CD4-positive, alpha-beta T cell (primary cell): ENCODE measurements at regions of chr13 and their contacts with region 1.

Region 1: DNA sequence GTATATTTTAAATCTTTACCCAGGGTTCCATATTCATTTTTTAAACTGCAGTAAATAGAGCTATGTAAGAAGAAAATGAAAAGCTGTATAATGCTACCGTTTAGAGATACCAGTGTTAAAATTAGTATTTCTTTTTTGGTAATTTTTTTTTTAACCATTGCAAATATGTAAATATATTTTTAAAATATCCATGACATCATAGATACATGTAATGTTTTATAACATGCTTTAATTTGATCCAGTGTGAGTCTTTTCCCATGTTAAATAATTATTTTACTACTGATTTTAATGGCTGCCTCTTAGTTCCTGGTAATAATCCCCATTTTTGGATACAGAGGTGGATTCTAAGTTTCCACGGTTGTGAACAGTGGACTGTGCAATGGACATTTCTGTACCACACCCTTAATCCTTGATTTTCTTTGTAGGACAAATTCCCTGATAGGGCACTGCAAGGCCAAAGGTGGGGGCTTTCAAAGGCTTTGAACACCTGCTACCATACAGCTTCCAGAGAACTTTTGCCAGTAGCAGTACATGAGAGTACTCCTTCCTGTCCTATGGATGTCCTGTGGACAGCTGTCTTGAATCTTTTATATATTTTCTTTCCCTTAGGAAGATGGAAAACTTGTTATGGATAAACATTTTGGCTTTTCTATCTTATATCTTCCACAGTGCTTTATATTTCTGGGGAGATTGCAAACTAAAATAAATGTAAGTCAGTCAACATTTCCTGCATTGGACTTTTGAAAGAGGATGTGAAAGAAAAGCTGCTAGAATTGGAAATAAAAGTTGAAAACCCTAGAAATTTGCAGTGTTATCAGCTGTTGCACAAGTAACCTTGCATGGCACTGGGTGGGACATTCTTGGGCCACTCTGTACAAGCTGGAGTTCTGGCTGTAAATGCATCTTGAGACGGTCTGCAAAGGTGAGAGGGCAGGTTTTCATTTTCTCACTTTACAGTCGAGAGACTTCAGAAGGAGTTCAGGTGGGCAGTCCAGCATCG is 46.8 kb downstream of the ARHGEF7 start:
- DNase-seq: no peak
- ATAC-seq: no peak
- H3K4me3 ChIP-seq: no peak overlapping the region
- H3K4me3 Mint-ChIP-seq: no peak overlapping the region
- H3K27ac ChIP-seq: no peak overlapping the region
- H3K27ac Mint-ChIP-seq: no peak overlapping the region
- H3K4me1 ChIP-seq: peaks cover 22% of the 10 kb centered on the region
- H3K4me1 Mint-ChIP-seq: peaks cover 80% of the 10 kb centered on the region
- H3K27me3 ChIP-seq: no peaks in the 10 kb centered on the region
- H3K27me3 Mint-ChIP-seq: no peaks in the 10 kb centered on the region
- CTCF ChIP-seq: no peak

Region 2: DNA sequence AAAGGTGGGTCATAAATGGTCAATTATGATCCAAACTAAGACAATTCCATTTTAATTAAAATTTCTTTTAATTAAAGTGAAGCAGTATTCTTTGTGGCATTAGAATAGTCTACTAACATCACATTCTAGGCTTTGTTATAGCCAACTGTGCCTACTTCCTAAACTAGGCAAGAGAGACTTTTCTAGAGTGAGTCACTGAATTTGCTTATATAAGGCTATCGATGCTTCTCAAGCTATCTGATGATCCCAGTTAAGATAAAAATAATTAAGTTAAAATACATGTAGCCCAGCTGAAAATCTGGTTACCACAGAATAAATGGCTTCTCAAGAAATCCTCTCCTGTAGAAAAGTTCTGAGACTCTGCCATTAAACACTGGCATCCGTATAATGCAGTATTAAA is 259.5 kb before region 1 on chr13:
- CTCF ChIA-PET with region 1: no interaction called
- POLR2A ChIA-PET with region 1: no interaction called
- intact Hi-C with region 1: no loop called
- DNase-seq: no peak
- ATAC-seq: no peak
- H3K4me3 ChIP-seq: no peak overlapping the region
- H3K4me3 Mint-ChIP-seq: no peak overlapping the region
- H3K27ac ChIP-seq: no peak overlapping the region
- H3K27ac Mint-ChIP-seq: no peak overlapping the region
- H3K4me1 ChIP-seq: no peaks in the 10 kb centered on the region
- H3K4me1 Mint-ChIP-seq: peaks cover 20% of the 10 kb centered on the region
- H3K27me3 ChIP-seq: no peaks in the 10 kb centered on the region
- H3K27me3 Mint-ChIP-seq: no peaks in the 10 kb centered on the region
- CTCF ChIP-seq: no peak

Region 3: DNA sequence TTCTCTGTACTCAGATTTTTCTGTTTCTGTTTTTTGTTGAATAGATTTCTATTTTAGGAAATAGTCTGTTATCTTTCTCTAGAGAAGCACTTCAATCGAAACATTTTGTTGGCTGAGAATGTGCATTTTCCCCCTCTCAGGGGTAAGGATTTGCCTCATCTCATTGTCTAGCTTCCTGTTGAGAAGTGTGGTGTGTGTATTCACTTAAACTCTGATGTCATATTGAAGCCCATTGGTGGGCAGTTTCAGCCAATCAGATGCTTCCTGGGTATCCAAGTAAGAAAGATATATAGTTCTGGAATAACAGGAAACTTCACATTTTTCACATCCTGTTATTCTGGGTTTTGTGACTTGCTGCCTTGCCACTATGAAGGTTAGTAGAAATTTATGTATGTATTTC is 40.8 kb after region 1 on chr13:
- CTCF ChIA-PET with region 1: interaction called, 4 read pairs
- POLR2A ChIA-PET with region 1: interaction called, 4 read pairs
- intact Hi-C with region 1: loop called in 1 of 2 experiments (anchors 5 kb)
- DNase-seq: peak in 5 of 14 experiments; percentile 34 to 61 (median 50)
- ATAC-seq: peak; percentile 91
- H3K4me3 ChIP-seq: no peak overlapping the region
- H3K4me3 Mint-ChIP-seq: peak overlapping the region; percentile 68
- H3K27ac ChIP-seq: no peak overlapping the region
- H3K27ac Mint-ChIP-seq: peak overlapping the region; percentile 88
- H3K4me1 ChIP-seq: peaks cover 38% of the 10 kb centered on the region
- H3K4me1 Mint-ChIP-seq: peaks cover 82% of the 10 kb centered on the region
- H3K27me3 ChIP-seq: no peaks in the 10 kb centered on the region
- H3K27me3 Mint-ChIP-seq: no peaks in the 10 kb centered on the region
- CTCF ChIP-seq: no peak